HEK293T (cell line): ENCODE measurements at regions of chr12 and their contacts with region 1.

Region 1: GRCh38 chr12:55738123-55739024 is 4.5 kb upstream of the GDF11 start:
- DNase-seq: peak; percentile 76

Region 2: GRCh38 chr12:55659486-55660385 is 78.6 kb before region 1 on chr12:
- CTCF ChIA-PET with region 1: interaction called, 13 read pairs
- POLR2A ChIA-PET with region 1: no interaction called
- DNase-seq: no peak

Region 3: GRCh38 chr12:55765736-55766290 is 27.4 kb after region 1 on chr12:
- CTCF ChIA-PET with region 1: no interaction called
- POLR2A ChIA-PET with region 1: no interaction called
- DNase-seq: no peak

Region 4: GRCh38 chr12:55780685-55781084 is 42.3 kb after region 1 on chr12:
- CTCF ChIA-PET with region 1: no interaction called
- POLR2A ChIA-PET with region 1: no interaction called
- DNase-seq: no peak

Region 5: DNA sequence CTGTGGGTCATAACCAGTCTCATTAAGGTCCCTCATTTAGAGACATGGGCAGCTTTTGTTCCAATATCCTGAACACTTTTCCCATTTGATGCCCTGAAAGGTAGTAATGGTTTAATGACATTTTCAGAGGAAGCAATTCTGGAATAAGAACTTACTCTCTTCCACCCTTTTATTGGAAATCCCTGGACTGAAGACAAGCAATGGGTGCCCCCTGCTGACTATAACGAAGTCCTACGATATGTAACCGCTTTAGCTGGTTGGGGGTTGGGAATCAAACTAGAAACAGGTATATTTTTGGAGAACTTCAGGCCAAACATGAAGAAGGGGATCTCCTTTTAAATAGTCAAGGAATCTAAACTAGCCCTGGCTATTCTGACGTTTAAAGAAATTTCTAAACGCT is 58.7 kb after region 1 on chr12:
- CTCF ChIA-PET with region 1: interaction called, 32 read pairs
- POLR2A ChIA-PET with region 1: interaction called, 3 read pairs
- DNase-seq: peak; percentile 55

Region 6: DNA sequence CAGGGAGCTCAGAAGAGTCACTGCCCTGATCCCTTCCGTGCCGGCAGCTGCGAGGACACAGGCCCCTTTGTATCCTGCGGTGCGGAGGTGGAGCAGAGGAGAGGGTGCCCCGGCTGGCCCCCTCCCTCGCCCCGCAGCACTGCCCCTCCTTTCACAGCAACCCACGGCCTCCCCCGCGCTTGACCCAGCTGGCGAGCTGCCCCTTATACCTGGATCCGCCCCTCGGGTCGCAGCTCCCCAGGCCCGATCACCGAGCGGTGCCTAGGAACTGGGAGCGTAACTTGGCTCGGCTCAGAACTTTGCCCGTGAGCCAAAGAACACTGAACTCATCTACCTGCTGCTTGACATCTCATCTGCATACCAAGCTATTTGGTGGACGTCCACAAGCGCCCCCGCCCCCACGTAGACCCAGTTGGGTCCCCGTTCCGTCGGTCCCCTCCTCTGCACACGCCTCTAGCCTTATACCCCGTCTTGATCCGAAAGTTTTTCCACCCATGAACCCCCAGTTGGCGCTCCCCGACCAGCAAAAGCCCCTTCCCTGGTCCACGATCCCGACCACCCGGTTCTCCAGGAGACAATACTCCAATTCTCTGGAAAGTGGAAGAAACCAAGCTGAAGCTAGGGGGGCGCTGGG is 91.7 kb after region 1 on chr12:
- CTCF ChIA-PET with region 1: interaction called, 4 read pairs
- POLR2A ChIA-PET with region 1: interaction called, 14 read pairs
- DNase-seq: no peak

Region 7: DNA sequence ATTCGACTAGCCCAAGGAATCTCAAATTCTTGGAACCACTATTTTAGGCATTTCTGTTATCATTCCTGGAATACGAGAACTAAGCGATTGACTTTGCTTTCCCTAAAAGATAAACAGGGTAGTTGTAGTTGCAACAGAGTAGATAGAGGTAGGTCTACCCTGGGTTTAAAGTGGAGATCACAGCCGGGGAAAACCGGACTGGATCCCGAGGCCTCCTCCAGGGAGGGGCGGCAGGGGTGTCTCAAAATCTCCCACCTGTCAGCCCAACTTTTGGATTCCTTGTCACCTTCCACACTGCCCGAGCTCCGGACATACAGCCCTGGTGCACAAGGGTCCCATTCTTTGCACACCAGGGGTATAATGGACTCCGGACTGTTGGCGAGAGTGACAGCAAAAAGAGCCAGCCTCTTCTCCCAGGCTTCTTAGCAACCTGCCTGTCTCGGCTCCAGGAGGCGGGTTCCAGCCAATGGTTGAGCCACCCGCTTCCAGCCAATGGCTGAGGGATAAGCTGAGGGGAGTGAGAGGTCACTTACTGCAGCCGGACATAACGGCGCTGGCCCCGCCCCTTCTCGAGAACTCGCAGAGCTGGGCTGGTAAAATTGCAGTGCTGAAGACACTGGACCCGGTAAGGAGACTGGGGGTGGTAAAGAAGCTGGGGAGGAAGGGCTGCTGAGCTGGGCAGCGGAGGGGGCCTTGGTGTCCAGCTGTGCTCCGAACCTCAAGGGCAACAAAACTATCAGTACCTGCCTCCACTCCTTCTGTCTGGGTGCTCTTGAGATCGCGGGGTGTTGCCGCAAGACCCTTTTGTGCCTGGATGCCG is 258.6 kb after region 1 on chr12 and contains the start of gene SUOX:
- CTCF ChIA-PET with region 1: interaction called, 12 read pairs
- POLR2A ChIA-PET with region 1: interaction called, 3 read pairs
- DNase-seq: peak; percentile 94